Thyroid gland (tissue), 4 donors: ENCODE measurements at regions of chr18 and their contacts with region 1.

Region 1: GRCh38 chr18:59056706-59057492 is 82.8 kb upstream of the SEC11C start:
- DNase-seq: peak; percentile 60 to 88
- H3K4me3 ChIP-seq: no peak overlapping the region
- H3K27ac ChIP-seq: no peak overlapping the region
- H3K4me1 ChIP-seq: peaks cover 25 to 38% of the 10 kb centered on the region in 2 donors
- H3K27me3 ChIP-seq: no peaks in the 10 kb centered on the region
- CTCF ChIP-seq: peak in 5 of 6 experiments; percentile 77 to 97 (median 87)
- POLR2A ChIP-seq: no peak

Region 2: GRCh38 chr18:58858616-58859468 is 198.1 kb before region 1 on chr18:
- intact Hi-C with region 1: loop called (anchors 10 kb)
- DNase-seq: peak; percentile 19 to 32
- H3K4me3 ChIP-seq: no peak overlapping the region
- H3K27ac ChIP-seq: peak overlapping the region; percentile 74 to 99 (median 96)
- H3K4me1 ChIP-seq: peaks cover 37 to 44% of the 10 kb centered on the region in 2 donors
- H3K27me3 ChIP-seq: no peaks in the 10 kb centered on the region
- CTCF ChIP-seq: no peak
- POLR2A ChIP-seq: no peak

Region 3: GRCh38 chr18:59005262-59005661 is 51.6 kb before region 1 on chr18:
- intact Hi-C with region 1: loop called (anchors 10 kb)
- DNase-seq: peak; percentile 40 to 62
- H3K4me3 ChIP-seq: no peak overlapping the region
- H3K27ac ChIP-seq: peak overlapping the region; percentile 30 to 43 (median 39)
- H3K4me1 ChIP-seq: peaks cover 0 to 10% of the 10 kb centered on the region in 2 donors
- H3K27me3 ChIP-seq: no peaks in the 10 kb centered on the region
- CTCF ChIP-seq: no peak
- POLR2A ChIP-seq: no peak

Region 4: DNA sequence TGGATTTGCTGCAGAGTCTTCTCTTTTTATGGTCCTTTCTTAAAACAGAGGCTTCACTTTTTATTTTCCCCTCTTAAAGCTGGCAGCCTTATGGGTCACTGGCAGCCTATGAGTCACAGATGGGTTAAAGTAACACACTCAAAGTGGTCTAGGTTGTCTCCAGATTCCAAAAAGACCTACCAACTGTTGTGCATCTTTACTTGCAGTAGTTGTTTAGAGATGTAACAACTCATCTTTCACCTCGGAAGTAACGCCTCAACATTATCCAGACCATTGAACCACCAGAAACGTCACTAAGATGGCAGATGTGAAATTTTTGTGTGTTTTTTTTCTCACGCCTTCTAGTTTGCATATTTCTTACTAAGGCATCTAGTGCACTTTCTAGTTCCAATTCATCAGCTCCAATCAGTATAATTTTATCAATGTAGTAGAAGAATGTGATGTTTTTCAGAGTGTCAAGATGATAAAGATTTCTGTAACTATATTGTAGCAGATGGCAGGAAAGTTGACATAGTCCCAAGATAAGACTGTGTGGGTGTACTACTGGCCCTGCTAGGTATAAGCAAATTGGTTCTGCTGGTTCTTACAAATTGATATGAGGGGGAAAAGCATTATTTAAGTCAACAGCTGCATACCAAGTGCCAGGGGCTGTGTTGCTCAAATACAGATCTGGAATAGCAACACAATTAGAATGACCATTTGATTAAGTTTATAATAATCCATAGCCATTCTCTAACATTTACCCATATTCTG is 73.2 kb after region 1 on chr18:
- intact Hi-C with region 1: no loop called
- DNase-seq: no peak
- H3K4me3 ChIP-seq: no peak overlapping the region
- H3K27ac ChIP-seq: no peak overlapping the region
- H3K4me1 ChIP-seq: no peaks in the 10 kb centered on the region
- H3K27me3 ChIP-seq: no peaks in the 10 kb centered on the region
- CTCF ChIP-seq: no peak
- POLR2A ChIP-seq: no peak